A549 (cell line): ENCODE measurements at regions of chr2 and their contacts with region 1.

Region 1: GRCh38 chr2:170873035-170873692 is 55.9 kb upstream of the GORASP2 start:
- DNase-seq: peak; percentile 71 to 84
- ATAC-seq: peak; percentile 95 to 99
- H3K4me3 ChIP-seq: no peak overlapping the region
- H3K27ac ChIP-seq: peak overlapping the region; percentile 28 to 76; a peak in 3 of 6 replicates
- H3K4me1 ChIP-seq: no peaks in the 10 kb centered on the region
- CTCF ChIP-seq: peak; percentile 87
- EP300 ChIP-seq: no peak
- POLR2A ChIP-seq: no peak
- RAD21 ChIP-seq: peak; percentile 50 to 57

Region 2: GRCh38 chr2:170843656-170844055 is 29.5 kb before region 1 on chr2:
- CTCF ChIA-PET with region 1: interaction called, 18 read pairs
- POLR2A ChIA-PET with region 1: no interaction called
- DNase-seq: no peak
- ATAC-seq: no peak
- H3K4me3 ChIP-seq: no peak overlapping the region
- H3K27ac ChIP-seq: no peak overlapping the region
- H3K4me1 ChIP-seq: no peaks in the 10 kb centered on the region
- CTCF ChIP-seq: no peak
- EP300 ChIP-seq: no peak
- POLR2A ChIP-seq: no peak
- RAD21 ChIP-seq: no peak

Region 3: DNA sequence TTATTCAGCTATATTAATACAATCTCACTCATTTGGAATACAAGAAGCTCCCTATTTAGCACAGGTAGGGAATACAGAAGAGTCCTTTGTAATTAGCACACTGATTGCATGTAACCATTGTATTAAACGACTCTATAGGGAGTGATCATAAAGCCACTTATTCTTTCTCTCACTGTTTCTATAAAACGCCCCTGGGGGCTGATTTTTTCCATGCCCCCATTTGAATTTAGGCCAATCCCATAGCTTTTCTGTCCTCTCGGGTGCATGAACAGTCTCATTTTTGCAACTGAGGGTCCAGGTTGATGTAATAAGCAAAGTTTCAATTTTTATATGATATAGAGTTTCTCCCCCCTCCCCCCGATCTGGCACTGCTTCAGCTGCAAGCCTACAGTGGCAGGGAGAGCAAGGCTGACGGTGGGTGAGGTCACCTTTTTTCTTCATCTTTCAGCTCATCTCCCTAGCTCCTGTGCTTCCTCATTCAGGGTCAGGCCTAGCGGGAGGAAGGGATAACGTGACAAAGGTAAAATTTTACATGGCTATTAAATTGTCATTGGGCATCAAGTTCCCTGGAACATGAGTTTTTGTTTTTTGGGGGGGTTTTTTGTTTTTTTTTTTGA is 10.8 kb before region 1 on chr2:
- CTCF ChIA-PET with region 1: interaction called, 29 read pairs
- POLR2A ChIA-PET with region 1: no interaction called
- DNase-seq: no peak
- ATAC-seq: no peak
- H3K4me3 ChIP-seq: no peak overlapping the region
- H3K27ac ChIP-seq: no peak overlapping the region
- H3K4me1 ChIP-seq: no peaks in the 10 kb centered on the region
- CTCF ChIP-seq: no peak
- EP300 ChIP-seq: no peak
- POLR2A ChIP-seq: no peak
- RAD21 ChIP-seq: no peak

Region 4: DNA sequence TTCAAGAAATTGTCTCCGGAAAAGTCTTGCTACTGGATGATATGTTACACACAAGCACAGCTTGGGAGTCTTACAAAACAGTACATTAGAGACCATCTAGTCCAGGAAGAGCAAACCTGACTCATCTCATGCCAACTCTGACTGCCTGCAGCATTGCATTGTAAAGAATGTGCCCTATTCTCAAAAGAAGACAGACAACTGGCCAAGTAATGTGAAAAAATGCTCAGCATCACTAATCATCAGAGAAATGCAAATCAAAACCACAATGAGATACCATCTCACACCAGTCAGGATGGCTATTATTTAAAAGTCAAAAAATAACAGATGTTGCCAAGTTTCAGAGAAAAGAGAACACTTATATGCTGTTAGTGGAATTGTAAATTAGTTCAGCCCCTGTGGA is 13.2 kb after region 1 on chr2:
- CTCF ChIA-PET with region 1: interaction called, 39 read pairs
- POLR2A ChIA-PET with region 1: no interaction called
- DNase-seq: no peak
- ATAC-seq: no peak
- H3K4me3 ChIP-seq: no peak overlapping the region
- H3K27ac ChIP-seq: no peak overlapping the region
- H3K4me1 ChIP-seq: no peaks in the 10 kb centered on the region
- CTCF ChIP-seq: no peak
- EP300 ChIP-seq: no peak
- POLR2A ChIP-seq: no peak
- RAD21 ChIP-seq: no peak

Region 5: GRCh38 chr2:170895023-170895757 is 22.0 kb after region 1 on chr2:
- CTCF ChIA-PET with region 1: interaction called, 16 read pairs
- POLR2A ChIA-PET with region 1: no interaction called
- DNase-seq: no peak
- ATAC-seq: no peak; a peak in 2 of 6 replicates
- H3K4me3 ChIP-seq: no peak overlapping the region
- H3K27ac ChIP-seq: no peak overlapping the region
- H3K4me1 ChIP-seq: no peaks in the 10 kb centered on the region
- CTCF ChIP-seq: no peak
- EP300 ChIP-seq: no peak
- POLR2A ChIP-seq: no peak
- RAD21 ChIP-seq: no peak